GM10248 (cell line): ENCODE measurements at regions of chr2 and their contacts with region 1.

Region 1: GRCh38 chr2:46555011-46555410 is 75.6 kb downstream of the TMEM247 start:
- DNase-seq: no peak
- CTCF ChIP-seq: peak; percentile 45

Region 2: DNA sequence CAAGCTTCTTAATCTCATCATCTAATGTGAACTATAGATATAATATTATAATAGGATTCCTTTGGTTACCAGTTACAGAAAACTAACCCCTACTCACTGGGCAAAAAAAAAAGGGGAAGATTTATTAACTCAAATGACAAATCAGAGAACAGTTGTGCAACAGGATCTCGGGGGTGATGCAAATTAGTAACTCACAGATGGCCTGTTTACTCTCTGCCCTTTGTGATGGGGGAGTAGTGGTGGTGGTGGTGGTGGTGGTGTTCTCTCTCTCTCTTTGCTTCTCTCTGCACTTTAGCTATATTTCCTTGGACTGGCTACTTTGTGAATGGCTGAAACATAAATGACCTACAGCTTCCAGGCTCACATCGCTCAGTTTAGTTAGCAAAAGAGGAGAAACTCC is 16.6 kb before region 1 on chr2:
- CTCF ChIA-PET with region 1: interaction called, 17 read pairs
- POLR2A ChIA-PET with region 1: no interaction called
- DNase-seq: no peak
- CTCF ChIP-seq: no peak